ENCODE measurements at regions of chr14 and their contacts with region 1.

Region 1: DNA sequence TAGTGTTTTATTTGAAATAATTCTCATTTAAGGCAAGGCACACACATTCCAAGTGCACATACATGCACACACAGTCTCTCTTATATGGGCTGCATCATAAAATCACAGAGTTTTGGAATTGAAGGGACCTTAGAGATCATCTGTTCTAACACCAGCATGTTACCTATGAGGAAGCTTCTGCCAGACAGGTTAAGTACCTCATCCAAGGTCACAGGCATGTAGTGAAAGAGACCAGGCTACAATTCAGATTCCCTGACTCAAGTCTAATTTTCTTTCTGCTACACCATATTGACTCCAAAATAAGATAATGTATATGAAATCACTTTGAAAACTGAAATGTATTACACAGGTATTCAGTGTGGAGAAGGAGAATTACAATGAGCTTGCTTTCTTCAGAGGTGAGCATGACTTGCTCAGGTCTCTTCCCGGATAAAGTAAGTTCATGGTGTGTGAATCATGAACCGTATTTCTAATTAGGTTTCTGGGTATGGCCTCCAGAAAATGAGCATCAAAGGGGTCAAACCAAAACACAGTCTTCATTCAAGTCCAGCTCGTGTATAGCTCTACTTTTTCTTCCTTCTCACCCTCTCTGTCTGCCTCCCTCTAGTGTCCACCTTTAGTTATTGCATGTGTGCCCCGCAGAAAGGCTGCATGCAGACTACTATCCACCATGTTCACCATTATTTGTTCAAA is 411.9 kb downstream of the FUT8 start:
- DNase-seq: peak; percentile 34
- ATAC-seq: peak; percentile 95
- H3K4me3 ChIP-seq: no peak overlapping the region
- H3K27ac ChIP-seq: no peak overlapping the region
- H3K4me1 ChIP-seq: no peaks in the 10 kb centered on the region
- H3K27me3 ChIP-seq: peaks cover under 1 to 8% of the 10 kb centered on the region in 2 experiments; a peak in 3 of 4 replicates
- CTCF ChIP-seq: peak; percentile 89 to 95 (median 91); a peak in 5 of 6 replicates
- EP300 ChIP-seq: no peak
- POLR2A ChIP-seq: no peak
- RAD21 ChIP-seq: peak; percentile 92

Region 2: GRCh38 chr14:65156568-65157366 is 667.7 kb before region 1 on chr14:
- CTCF ChIA-PET with region 1: interaction called, 9 read pairs
- POLR2A ChIA-PET with region 1: no interaction called
- RAD21 ChIA-PET with region 1: interaction called, 7 read pairs
- SMC1A ChIA-PET with region 1: interaction called, 14 read pairs
- in situ Hi-C with region 1: no loop called
- intact Hi-C with region 1: no loop called
- DNase-seq: peak; percentile 45
- ATAC-seq: peak; percentile 92
- H3K4me3 ChIP-seq: peak overlapping the region; percentile 48; the same call in 1 of the 2 replicates
- H3K27ac ChIP-seq: peak overlapping the region; percentile 85
- H3K4me1 ChIP-seq: peaks cover 48% of the 10 kb centered on the region
- H3K27me3 ChIP-seq: no peaks in the 10 kb centered on the region
- CTCF ChIP-seq: no peak
- EP300 ChIP-seq: 0 out of 4 replicates have a peak, but pooled peaks of 1 of the 2 experiments have one; percentile 46
- POLR2A ChIP-seq: no peak
- RAD21 ChIP-seq: no peak

Region 3: DNA sequence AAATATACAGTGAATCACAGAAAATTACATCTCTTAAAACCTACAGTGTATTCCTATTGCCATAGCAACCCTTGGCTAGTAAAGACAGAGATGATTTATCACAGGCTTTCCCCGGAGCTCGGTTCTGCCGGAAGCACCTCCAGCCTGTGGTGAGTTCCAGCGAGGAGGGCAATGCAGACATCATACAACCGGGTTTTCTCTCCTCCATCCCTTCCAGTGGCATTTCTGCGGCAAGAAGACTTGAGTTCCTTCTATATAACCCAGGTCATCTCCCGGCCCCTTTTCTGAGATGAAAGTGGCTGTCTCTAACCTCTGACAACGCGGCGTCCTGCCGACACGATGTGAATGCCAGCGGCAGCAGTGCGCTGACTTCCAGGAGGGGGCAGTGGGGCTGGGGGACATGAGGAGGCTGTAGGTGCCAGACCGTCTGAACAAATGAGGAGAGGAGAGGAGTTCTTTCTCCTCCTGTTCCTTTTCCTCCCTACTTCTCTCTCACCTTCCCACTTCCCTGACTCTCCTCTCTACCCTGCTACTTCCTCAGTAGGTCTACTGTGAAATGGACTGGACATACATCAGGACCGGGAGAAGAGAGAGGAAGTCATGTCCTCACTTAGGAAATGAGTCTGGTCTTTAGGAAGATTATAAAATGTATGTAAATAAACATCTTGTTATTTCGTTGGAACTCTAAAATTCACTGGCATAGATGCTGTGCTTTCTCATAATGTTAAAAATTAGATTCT is 653.5 kb before region 1 on chr14:
- CTCF ChIA-PET with region 1: interaction called, 106 read pairs
- POLR2A ChIA-PET with region 1: no interaction called
- RAD21 ChIA-PET with region 1: interaction called, 5 read pairs
- SMC1A ChIA-PET with region 1: interaction called, 38 read pairs
- in situ Hi-C with region 1: loop called (anchors 5 kb)
- intact Hi-C with region 1: no loop called
- DNase-seq: peak; percentile 40
- ATAC-seq: peak; percentile 55
- H3K4me3 ChIP-seq: peak overlapping the region; percentile 57
- H3K27ac ChIP-seq: peak overlapping the region; percentile 59
- H3K4me1 ChIP-seq: peaks cover 26% of the 10 kb centered on the region
- H3K27me3 ChIP-seq: no peaks in the 10 kb centered on the region
- CTCF ChIP-seq: peak in 2 of 3 experiments; percentile 25 to 43; a peak in 3 of 6 replicates
- EP300 ChIP-seq: no peak
- POLR2A ChIP-seq: 0 out of 2 replicates have a peak, but pooled peaks have one; percentile 44
- RAD21 ChIP-seq: peak; percentile 46

Region 4: GRCh38 chr14:65281991-65282895 is 542.2 kb before region 1 on chr14:
- CTCF ChIA-PET with region 1: interaction called, 26 read pairs
- POLR2A ChIA-PET with region 1: no interaction called
- RAD21 ChIA-PET with region 1: interaction called, 17 read pairs
- SMC1A ChIA-PET with region 1: interaction called, 17 read pairs
- in situ Hi-C with region 1: no loop called
- intact Hi-C with region 1: loop called (anchors 10 kb)
- DNase-seq: no peak
- ATAC-seq: peak; percentile 55
- H3K4me3 ChIP-seq: peak overlapping the region; percentile 66
- H3K27ac ChIP-seq: peak overlapping the region; percentile 89
- H3K4me1 ChIP-seq: peaks cover 43% of the 10 kb centered on the region
- H3K27me3 ChIP-seq: no peaks in the 10 kb centered on the region
- CTCF ChIP-seq: no peak
- EP300 ChIP-seq: no peak
- POLR2A ChIP-seq: 0 out of 2 replicates have a peak, but pooled peaks have one; percentile 8
- RAD21 ChIP-seq: no peak

Region 5: DNA sequence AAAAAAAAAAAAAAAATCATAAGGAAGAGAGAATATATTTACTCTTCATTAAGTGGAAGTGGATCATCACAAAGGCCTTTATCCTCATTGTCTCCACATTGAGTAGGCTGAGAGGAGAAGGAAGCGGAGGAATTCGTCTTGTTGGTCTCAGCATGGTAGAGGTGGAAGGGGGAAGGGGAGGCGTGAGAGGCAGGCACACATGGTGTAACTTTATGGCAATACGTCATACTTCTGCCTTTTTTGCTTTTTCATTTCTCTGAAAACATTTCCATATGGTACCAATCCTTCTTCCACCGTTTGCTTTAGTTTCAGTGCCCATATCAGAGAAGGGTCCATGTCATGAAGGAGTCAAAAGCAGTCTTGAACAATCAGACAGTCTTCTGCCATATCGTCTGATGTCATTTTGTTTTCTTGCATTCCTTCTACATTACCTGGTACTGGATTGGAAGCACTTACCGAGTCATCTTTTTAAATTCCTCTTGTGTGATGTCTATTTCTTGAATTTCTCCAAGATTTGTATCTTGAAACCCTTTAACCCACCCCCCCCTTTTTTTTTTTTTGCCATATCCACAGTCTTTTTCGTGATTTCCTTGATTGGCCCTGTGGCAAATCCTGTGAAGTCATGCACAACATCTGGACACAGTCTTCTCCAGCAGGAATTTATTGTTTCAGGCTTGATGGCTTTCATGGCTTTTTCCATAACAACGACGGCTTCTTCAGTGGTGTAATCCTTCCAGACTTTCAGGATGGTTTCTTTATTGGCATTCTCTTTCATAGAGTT is 403.0 kb before region 1 on chr14:
- CTCF ChIA-PET with region 1: interaction called, 323 read pairs
- POLR2A ChIA-PET with region 1: interaction called, 3 read pairs
- RAD21 ChIA-PET with region 1: interaction called, 287 read pairs
- SMC1A ChIA-PET with region 1: interaction called, 288 read pairs
- in situ Hi-C with region 1: loop called (anchors 5 kb)
- intact Hi-C with region 1: no loop called
- DNase-seq: no peak
- ATAC-seq: no peak
- H3K4me3 ChIP-seq: no peak overlapping the region
- H3K27ac ChIP-seq: no peak overlapping the region
- H3K4me1 ChIP-seq: 0 out of 2 replicates have a peak, but pooled peaks cover 3% of the 10 kb centered on the region
- H3K27me3 ChIP-seq: no peaks in the 10 kb centered on the region
- CTCF ChIP-seq: no peak
- EP300 ChIP-seq: no peak
- POLR2A ChIP-seq: no peak
- RAD21 ChIP-seq: no peak

Region 6: DNA sequence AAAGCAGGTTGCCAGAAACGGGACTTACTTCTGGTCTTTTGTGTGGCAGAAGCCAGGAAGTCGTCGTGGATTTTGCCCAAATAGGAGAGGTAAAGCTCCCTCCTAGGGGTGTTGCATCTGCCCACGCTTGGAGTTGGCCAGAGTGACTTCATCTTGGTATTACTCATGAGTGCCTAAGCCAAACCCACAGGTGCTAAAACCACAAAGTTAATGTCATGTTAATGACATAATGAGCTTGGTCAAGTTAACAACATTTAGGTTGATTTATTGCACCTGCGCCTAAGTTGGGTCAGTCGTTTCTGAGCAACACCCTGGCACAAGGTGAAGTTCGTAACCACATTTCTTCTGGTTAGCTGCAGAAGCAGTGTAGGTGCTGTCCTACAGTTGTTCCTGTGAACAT is 186.7 kb before region 1 on chr14:
- CTCF ChIA-PET with region 1: interaction called, 4 read pairs
- POLR2A ChIA-PET with region 1: no interaction called
- RAD21 ChIA-PET with region 1: no interaction called
- SMC1A ChIA-PET with region 1: no interaction called
- in situ Hi-C with region 1: no loop called
- intact Hi-C with region 1: loop called (anchors 10 kb)
- DNase-seq: peak; percentile 72
- ATAC-seq: peak; percentile 98
- H3K4me3 ChIP-seq: no peak overlapping the region
- H3K27ac ChIP-seq: no peak overlapping the region
- H3K4me1 ChIP-seq: peaks cover 11% of the 10 kb centered on the region
- H3K27me3 ChIP-seq: no peaks in the 10 kb centered on the region
- CTCF ChIP-seq: no peak
- EP300 ChIP-seq: peak; percentile 80
- POLR2A ChIP-seq: no peak
- RAD21 ChIP-seq: no peak

Region 7: DNA sequence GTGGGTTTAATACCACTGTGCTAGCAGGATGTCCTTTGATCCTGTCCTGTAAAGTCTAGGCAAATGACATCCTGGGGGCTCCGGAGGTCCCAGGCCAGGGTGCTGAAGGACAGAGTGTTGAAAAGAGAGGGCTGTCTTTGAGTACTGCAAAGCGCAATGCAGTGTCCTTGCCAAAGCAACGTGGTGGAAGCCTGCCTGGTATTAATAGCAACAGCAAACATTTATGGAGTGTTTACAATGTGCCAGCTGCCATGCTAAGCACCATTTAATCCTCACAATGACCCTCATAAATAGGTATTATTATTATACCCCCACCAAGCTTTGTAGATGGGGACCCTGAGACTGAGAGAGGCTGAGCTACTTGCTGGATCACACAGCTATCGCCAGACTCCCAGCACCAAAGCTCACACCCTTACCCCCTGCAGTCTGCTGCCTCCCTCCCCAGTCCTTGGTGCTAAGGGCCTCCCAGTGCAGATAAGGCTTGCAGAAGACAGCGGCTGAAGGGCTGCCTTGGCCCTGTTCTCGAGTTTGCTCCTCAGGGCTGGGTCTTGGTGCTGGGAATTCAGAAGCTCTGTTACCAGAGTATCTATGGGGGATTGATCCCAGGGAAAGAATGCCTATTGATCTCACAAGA is 15.8 kb after region 1 on chr14:
- CTCF ChIA-PET with region 1: interaction called, 13 read pairs
- POLR2A ChIA-PET with region 1: no interaction called
- RAD21 ChIA-PET with region 1: no interaction called
- SMC1A ChIA-PET with region 1: no interaction called
- in situ Hi-C with region 1: no loop called
- intact Hi-C with region 1: no loop called
- DNase-seq: no peak
- ATAC-seq: no peak
- H3K4me3 ChIP-seq: no peak overlapping the region
- H3K27ac ChIP-seq: no peak overlapping the region
- H3K4me1 ChIP-seq: no peaks in the 10 kb centered on the region
- H3K27me3 ChIP-seq: no peaks in the 10 kb centered on the region
- CTCF ChIP-seq: no peak
- EP300 ChIP-seq: no peak
- POLR2A ChIP-seq: no peak
- RAD21 ChIP-seq: no peak